ENCODE measurements at regions of chr3 and their contacts with region 1.

Region 1: DNA sequence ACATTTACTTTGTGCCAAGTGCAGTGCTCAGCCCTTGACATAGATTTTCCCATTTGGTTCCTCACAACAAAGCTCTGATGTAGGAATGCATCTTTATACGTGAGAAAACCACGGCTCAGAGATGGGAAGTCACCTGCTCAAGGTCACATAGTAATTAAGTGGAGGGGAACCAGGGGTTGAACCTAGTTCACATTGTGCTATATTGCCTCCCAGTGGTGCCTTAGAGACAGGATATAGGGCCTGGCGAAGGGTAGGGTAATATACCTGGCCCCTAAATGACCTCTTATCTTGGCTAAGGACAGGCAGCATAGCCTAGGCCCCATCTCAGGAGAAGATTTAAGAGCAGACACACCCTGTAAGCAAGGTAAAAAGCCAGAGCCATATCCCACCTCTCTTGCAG is 71.5 kb downstream of the FOXP1 start:
- DNase-seq: peak in 3 of 5 donors; percentile 53 to 66 (median 62)
- H3K4me3 ChIP-seq: no peak overlapping the region
- H3K4me3 Mint-ChIP-seq: peak overlapping the region in 1 of 7 donors; percentile 55
- H3K27ac ChIP-seq: no peak overlapping the region
- H3K27ac Mint-ChIP-seq: peak overlapping the region in 6 of 8 donors; percentile 56 to 73 (median 68)
- H3K4me1 ChIP-seq: peaks cover 24% of the 10 kb centered on the region
- H3K4me1 Mint-ChIP-seq: peaks cover 9 to 17% (median 16%) of the 10 kb centered on the region in 3 donors
- H3K27me3 ChIP-seq: no peaks in the 10 kb centered on the region
- H3K27me3 Mint-ChIP-seq: peaks cover 0 to 1% of the 10 kb centered on the region in 2 donors

Region 2: DNA sequence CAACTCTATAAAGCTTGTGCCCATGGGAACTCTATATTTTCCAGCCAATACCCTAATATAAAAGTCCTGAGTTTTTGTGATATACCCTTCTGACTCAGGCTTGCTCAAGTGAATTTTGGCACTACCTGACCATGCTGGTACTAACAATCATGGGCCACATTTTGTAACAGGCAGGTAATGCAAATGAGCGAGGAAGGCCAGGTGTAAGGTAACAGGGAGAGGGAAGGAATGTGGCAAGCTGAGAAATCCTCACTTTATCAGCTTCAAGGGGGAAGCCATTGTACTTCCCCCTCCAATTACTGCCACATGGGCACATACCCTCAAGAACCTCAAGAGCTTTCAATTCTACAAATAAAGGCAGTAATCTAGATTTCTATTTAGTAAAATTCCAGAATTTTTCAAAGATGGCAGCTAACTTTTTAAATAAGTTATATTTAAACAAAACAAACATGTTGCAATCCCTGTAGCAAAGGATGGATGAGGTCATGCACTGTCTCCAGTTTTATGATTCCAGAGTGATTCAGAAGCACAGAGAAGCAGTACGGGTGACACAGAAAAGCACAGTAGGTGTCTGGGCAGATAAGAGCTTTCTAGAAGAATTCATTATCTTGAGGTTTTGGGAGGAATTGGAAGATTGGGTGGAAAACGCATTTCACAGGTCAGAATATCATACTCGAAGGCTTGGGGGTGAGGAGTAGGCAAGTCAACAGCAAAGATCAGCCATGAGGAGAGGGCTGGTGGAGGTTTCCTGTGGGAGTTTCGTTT is 16.1 kb before region 1 on chr3:
- CTCF ChIA-PET with region 1: interaction called, 17 read pairs
- POLR2A ChIA-PET with region 1: no interaction called
- DNase-seq: peak in 1 of 5 donors; percentile 38
- H3K4me3 ChIP-seq: peak overlapping the region; percentile 45
- H3K4me3 Mint-ChIP-seq: peak overlapping the region; percentile 70 to 86 (median 81)
- H3K27ac ChIP-seq: peak overlapping the region; percentile 13
- H3K27ac Mint-ChIP-seq: peak overlapping the region; percentile 88 to 97 (median 92)
- H3K4me1 ChIP-seq: peaks cover 65% of the 10 kb centered on the region
- H3K4me1 Mint-ChIP-seq: peaks cover 71 to 91% (median 88%) of the 10 kb centered on the region in 3 donors
- H3K27me3 ChIP-seq: no peaks in the 10 kb centered on the region
- H3K27me3 Mint-ChIP-seq: no peaks in the 10 kb centered on the region

Region 3: DNA sequence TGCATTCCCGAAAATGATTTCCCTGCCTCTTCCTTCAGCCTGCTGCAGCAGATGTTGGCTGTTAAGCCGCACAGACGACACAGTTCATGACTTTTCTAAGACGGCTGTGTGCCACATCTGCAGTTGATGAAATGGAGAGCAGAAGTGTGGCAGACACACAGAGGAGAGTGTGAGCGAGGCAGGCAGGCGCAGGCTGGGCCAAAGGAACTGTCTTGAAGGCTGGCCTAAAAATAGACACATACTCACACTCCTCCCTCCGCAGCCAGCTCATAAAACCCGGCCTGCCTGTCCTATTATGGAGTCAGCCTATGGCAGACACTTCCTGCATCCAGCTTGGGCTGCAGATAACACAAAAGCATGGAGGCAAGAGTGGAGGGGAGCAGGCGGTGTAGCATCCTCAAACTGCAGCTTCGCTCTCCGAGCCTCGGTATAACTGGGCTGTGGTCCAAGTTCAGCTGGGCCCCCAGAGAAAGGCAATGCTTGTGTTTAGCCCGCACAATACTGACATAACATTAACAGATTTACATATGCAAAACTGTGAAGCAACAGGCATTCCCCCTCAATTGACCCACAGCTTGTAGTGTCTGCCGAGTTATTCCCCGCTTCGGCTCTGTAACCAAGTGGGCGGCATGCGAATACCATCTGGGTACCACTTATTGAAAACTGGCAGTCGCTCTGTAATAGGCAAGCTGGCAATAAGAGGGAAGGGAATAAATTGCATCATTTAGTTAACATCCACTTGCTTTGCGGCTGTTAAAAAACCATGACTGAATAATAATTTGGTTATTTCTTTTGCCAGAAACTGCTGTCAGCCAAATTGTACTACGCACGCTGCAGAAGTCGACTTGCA is 30.7 kb after region 1 on chr3:
- CTCF ChIA-PET with region 1: no interaction called
- POLR2A ChIA-PET with region 1: no interaction called
- DNase-seq: no peak
- H3K4me3 ChIP-seq: no peak overlapping the region
- H3K4me3 Mint-ChIP-seq: no peak overlapping the region
- H3K27ac ChIP-seq: no peak overlapping the region
- H3K27ac Mint-ChIP-seq: peak overlapping the region in 1 of 8 donors; percentile 82
- H3K4me1 ChIP-seq: no peaks in the 10 kb centered on the region
- H3K4me1 Mint-ChIP-seq: no peaks in the 10 kb centered on the region
- H3K27me3 ChIP-seq: no peaks in the 10 kb centered on the region
- H3K27me3 Mint-ChIP-seq: no peaks in the 10 kb centered on the region

Measured in CD8-positive, alpha-beta memory T cell (primary cell).